Sigmoid colon (tissue), 7 donors: ENCODE measurements at regions of chr6 and their contacts with region 1.

Region 1: GRCh38 chr6:36094753-36095496 is 35.4 kb upstream of the MAPK13 start:
- DNase-seq: peak; percentile 90
- H3K4me3 ChIP-seq: no peak overlapping the region
- H3K27ac ChIP-seq: peak overlapping the region; percentile 45 to 61 (median 57)
- H3K4me1 ChIP-seq: peaks cover 0 to 25% (median 11%) of the 10 kb centered on the region in 4 donors
- H3K27me3 ChIP-seq: no peaks in the 10 kb centered on the region
- CTCF ChIP-seq: peak; percentile 92 to 97 (median 95)
- EP300 ChIP-seq: no peak
- POLR2A ChIP-seq: no peak

Region 2: DNA sequence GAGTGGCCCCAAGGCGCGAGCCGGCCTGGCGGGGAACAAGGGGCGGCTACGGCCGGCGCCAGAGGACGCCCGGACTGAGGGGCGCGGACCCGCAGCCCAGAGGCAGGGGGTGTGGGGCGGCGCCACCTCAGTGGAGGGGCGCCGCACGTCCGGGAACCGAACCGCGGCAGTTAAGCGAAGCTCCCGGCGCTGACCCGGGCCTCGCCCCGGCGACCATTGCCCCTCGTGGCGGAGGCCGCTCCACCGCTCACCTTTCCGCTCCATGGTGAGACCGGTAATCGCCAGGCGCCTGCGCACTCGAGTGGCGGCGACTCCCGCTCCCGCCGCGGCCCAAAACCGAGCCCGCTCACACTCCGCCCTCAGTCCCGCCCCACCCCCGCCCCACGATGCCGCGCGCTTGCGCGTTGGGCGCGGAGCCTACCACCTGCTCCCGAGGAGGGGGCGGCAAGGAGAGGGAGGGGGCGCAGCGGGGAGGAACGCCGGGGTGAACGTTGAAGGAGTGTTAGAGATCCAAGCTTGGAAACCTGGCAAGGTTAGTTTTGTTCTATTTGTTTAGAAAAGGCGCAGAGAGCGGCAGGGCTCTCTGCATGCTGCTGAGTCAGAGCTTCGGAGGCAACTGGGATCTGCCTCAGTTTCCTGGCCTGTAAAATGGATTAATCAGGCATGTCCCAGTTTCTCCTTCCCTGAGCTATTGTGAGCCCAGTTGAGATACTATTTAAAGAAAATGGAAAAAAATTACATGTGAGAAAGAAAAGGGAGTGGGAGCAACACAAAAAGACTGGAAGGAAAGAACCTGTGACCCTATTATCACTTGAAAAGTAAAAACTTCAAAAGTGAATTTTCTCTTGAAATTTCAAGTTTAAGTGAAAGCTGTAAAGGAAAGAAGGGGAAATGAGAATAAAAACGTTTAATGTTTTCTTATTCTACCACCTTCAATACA is 173.9 kb before region 1 on chr6 and contains the start of gene SRPK1:
- intact Hi-C with region 1: loop called (anchors 5 kb)
- DNase-seq: peak; percentile 93
- H3K4me3 ChIP-seq: peak within 1 kb of the TSS; percentile 67 to 99 (median 88)
- H3K27ac ChIP-seq: peak within 1 kb of the TSS; percentile 77 to 83 (median 78)
- H3K4me1 ChIP-seq: peaks cover 0 to 31% (median 21%) of the 10 kb centered on the region in 4 donors
- H3K27me3 ChIP-seq: no peaks in the 10 kb centered on the region
- CTCF ChIP-seq: no peak
- EP300 ChIP-seq: no peak
- POLR2A ChIP-seq: peak in 1 of 2 donors; percentile 40
- total RNA-seq, gene SRPK1: 25.7 to 47.9 (median 40.8) TPM

Region 3: DNA sequence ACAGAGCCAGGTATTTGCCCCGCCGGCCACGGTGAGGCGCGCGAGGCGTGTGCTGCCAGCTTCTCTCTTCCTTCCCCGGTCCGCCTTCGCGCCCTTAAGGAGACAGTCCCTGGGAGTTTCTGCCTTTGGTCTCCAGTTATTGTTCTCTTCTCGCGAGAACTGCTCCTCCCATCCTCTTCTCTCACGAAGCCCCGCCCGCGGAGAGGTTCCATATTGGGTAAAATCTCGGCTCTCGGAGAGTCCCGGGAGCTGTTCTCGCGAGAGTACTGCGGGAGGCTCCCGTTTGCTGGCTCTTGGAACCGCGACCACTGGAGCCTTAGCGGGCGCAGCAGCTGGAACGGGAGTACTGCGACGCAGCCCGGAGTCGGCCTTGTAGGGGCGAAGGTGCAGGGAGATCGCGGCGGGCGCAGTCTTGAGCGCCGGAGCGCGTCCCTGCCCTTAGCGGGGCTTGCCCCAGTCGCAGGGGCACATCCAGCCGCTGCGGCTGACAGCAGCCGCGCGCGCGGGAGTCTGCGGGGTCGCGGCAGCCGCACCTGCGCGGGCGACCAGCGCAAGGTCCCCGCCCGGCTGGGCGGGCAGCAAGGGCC is 67.3 kb before region 1 on chr6 and contains the start of gene MAPK14:
- intact Hi-C with region 1: loop called (anchors 1 kb)
- DNase-seq: peak; percentile 100
- H3K4me3 ChIP-seq: peak within 1 kb of the TSS; percentile 65 to 98 (median 90)
- H3K27ac ChIP-seq: peak within 1 kb of the TSS; percentile 92 to 98 (median 94)
- H3K4me1 ChIP-seq: peaks cover 0 to 38% (median 27%) of the 10 kb centered on the region in 4 donors
- H3K27me3 ChIP-seq: peaks cover 3 to 22% (median 5%) of the 10 kb centered on the region in 3 donors
- CTCF ChIP-seq: peak; percentile 86 to 96 (median 95)
- EP300 ChIP-seq: peak in 1 of 4 donors; percentile 40
- POLR2A ChIP-seq: peak; percentile 94 to 95
- total RNA-seq, gene MAPK14: 61.9 to 91.1 (median 67.7) TPM

Region 4: GRCh38 chr6:36196880-36197548 is 102.1 kb after region 1 on chr6:
- intact Hi-C with region 1: loop called (anchors 5 kb)
- DNase-seq: peak; percentile 99
- H3K4me3 ChIP-seq: peak overlapping the region; percentile 80 to 97 (median 89)
- H3K27ac ChIP-seq: peak overlapping the region; percentile 93 to 99 (median 98)
- H3K4me1 ChIP-seq: peaks cover 0 to 38% (median 21%) of the 10 kb centered on the region in 4 donors
- H3K27me3 ChIP-seq: no peaks in the 10 kb centered on the region
- CTCF ChIP-seq: no peak
- EP300 ChIP-seq: no peak
- POLR2A ChIP-seq: peak; percentile 50 to 74

Region 5: GRCh38 chr6:36469148-36469661 is 374.3 kb after region 1 on chr6:
- intact Hi-C with region 1: no loop called
- DNase-seq: no peak
- H3K4me3 ChIP-seq: no peak overlapping the region
- H3K27ac ChIP-seq: no peak overlapping the region
- H3K4me1 ChIP-seq: no peaks in the 10 kb centered on the region
- H3K27me3 ChIP-seq: no peaks in the 10 kb centered on the region
- CTCF ChIP-seq: no peak
- EP300 ChIP-seq: no peak
- POLR2A ChIP-seq: no peak